HepG2 (cell line): ENCODE measurements at regions of chr14 and their contacts with region 1.

Region 1: GRCh38 chr14:93033983-93034670 is 81.6 kb downstream of the ITPK1 start:
- DNase-seq: no peak
- ATAC-seq: peak; percentile 27
- H3K4me3 ChIP-seq: no peak overlapping the region
- H3K27ac ChIP-seq: no peak overlapping the region
- H3K4me1 ChIP-seq: peaks cover 82% of the 10 kb centered on the region
- H3K27me3 ChIP-seq: no peaks in the 10 kb centered on the region
- CTCF ChIP-seq: peak; percentile 70
- EP300 ChIP-seq: no peak
- POLR2A ChIP-seq: no peak
- RAD21 ChIP-seq: peak; percentile 29; the same call in 1 of the 2 replicates

Region 2: GRCh38 chr14:92986254-92987147 is 47.6 kb before region 1 on chr14:
- CTCF ChIA-PET with region 1: no interaction called
- POLR2A ChIA-PET with region 1: no interaction called
- in situ Hi-C with region 1: no loop called
- intact Hi-C with region 1: loop called (anchors 1 kb)
- DNase-seq: peak; percentile 92
- ATAC-seq: peak; percentile 74
- H3K4me3 ChIP-seq: no peak overlapping the region; a peak in 1 of 6 replicates
- H3K27ac ChIP-seq: no peak overlapping the region
- H3K4me1 ChIP-seq: peaks cover 62% of the 10 kb centered on the region
- H3K27me3 ChIP-seq: no peaks in the 10 kb centered on the region
- CTCF ChIP-seq: no peak
- EP300 ChIP-seq: no peak
- POLR2A ChIP-seq: no peak
- RAD21 ChIP-seq: no peak

Region 3: GRCh38 chr14:93045965-93046704 is 12.0 kb after region 1 on chr14:
- CTCF ChIA-PET with region 1: no interaction called
- POLR2A ChIA-PET with region 1: no interaction called
- in situ Hi-C with region 1: no loop called
- intact Hi-C with region 1: loop called (anchors 1 kb)
- DNase-seq: no peak
- ATAC-seq: no peak
- H3K4me3 ChIP-seq: no peak overlapping the region
- H3K27ac ChIP-seq: no peak overlapping the region
- H3K4me1 ChIP-seq: peaks cover 85% of the 10 kb centered on the region
- H3K27me3 ChIP-seq: no peaks in the 10 kb centered on the region
- CTCF ChIP-seq: no peak
- EP300 ChIP-seq: no peak
- POLR2A ChIP-seq: no peak
- RAD21 ChIP-seq: no peak

Region 4: GRCh38 chr14:93132470-93133065 is 98.4 kb after region 1 on chr14:
- CTCF ChIA-PET with region 1: no interaction called
- POLR2A ChIA-PET with region 1: no interaction called
- in situ Hi-C with region 1: no loop called
- intact Hi-C with region 1: no loop called
- DNase-seq: peak; percentile 70
- ATAC-seq: peak; percentile 93
- H3K4me3 ChIP-seq: no peak overlapping the region
- H3K27ac ChIP-seq: no peak overlapping the region
- H3K4me1 ChIP-seq: peaks cover 30% of the 10 kb centered on the region
- H3K27me3 ChIP-seq: peaks cover 1 to 7% of the 10 kb centered on the region in 2 experiments; a peak in 3 of 5 replicates
- CTCF ChIP-seq: peak; percentile 81
- EP300 ChIP-seq: no peak
- POLR2A ChIP-seq: no peak
- RAD21 ChIP-seq: peak; percentile 21; the same call in 1 of the 2 replicates